ENCODE measurements at regions of chr20 and their contacts with region 1.

Region 1: DNA sequence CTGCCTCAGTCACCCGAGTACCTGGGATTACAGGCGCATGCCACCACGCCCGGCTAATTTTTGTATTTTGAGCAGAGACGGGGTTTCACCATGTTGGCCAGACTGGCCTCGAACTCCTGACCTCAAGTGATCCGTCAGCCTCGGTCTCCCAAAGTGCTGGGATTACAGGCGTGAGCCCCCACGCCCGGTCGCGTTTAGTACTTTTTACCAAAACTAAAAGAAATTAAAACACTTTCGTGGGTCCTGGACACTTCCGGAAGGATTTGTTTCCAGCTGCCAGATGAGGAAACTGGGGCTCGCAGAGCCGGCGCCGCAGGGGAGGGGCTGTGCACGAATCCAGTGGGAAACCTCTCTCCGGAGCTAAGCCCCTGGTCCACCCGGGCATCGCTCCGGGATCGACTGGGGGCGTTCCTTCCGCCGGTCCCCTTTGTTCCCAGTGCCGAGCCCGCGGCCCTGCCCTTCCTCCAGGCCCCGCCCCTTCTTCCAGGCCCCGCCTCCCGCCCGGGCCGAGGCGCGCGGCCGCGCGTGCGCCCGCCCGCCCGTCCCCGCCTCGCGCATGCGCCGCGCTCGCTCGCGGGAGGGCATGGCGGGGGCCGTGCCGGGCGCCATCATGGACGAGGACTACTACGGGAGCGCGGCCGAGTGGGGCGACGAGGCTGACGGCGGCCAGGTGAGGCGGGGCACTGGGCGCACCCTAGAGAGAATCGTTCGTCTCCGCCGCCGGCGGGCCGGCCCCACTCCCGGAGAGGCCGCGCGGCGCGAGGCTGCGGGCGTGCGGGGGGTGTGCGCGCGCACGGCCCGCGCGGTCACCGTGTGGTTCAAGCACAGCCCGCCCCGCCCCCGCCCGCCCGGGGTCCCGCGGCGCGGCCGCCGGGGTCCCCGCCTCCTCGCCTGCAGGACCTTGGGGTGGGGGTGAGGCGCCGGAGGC is at the start of gene NELFCD:
- DNase-seq: peak in 1 of 2 donors; percentile 92
- H3K4me3 ChIP-seq: peak within 1 kb of the TSS; percentile 85 to 96
- H3K27ac ChIP-seq: peak within 1 kb of the TSS; percentile 83 to 85
- H3K4me1 ChIP-seq: peaks cover 3 to 15% of the 10 kb centered on the region in 2 donors
- H3K27me3 ChIP-seq: no peaks in the 10 kb centered on the region
- CTCF ChIP-seq: no peak
- total RNA-seq, gene NELFCD: 20.8 TPM

Region 2: DNA sequence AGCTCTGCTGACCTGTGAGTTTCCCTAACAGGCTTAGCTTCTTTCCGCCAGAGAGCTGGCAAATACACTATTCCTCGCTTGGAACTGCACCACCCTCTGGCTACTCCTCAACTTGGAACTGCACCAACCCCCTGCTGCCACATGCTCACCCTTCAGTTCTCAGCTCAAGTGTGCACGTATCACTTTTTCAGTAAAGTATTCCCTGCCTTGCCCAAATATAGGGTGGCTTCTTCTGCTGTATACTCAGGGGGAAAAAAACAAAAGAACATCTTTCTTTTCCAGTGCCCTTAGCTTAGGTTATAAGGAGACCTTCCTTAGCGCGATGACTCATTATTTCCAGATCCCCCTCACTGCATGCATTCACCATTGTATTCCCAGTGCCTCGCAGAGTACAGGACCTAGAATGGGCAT is 151.4 kb before region 1 on chr20:
- intact Hi-C with region 1: no loop called
- DNase-seq: no peak
- H3K4me3 ChIP-seq: peak overlapping the region in 1 of 2 donors; percentile 16
- H3K27ac ChIP-seq: peak overlapping the region in 1 of 2 donors; percentile 71
- H3K4me1 ChIP-seq: no peaks in the 10 kb centered on the region
- H3K27me3 ChIP-seq: no peaks in the 10 kb centered on the region
- CTCF ChIP-seq: no peak

Region 3: DNA sequence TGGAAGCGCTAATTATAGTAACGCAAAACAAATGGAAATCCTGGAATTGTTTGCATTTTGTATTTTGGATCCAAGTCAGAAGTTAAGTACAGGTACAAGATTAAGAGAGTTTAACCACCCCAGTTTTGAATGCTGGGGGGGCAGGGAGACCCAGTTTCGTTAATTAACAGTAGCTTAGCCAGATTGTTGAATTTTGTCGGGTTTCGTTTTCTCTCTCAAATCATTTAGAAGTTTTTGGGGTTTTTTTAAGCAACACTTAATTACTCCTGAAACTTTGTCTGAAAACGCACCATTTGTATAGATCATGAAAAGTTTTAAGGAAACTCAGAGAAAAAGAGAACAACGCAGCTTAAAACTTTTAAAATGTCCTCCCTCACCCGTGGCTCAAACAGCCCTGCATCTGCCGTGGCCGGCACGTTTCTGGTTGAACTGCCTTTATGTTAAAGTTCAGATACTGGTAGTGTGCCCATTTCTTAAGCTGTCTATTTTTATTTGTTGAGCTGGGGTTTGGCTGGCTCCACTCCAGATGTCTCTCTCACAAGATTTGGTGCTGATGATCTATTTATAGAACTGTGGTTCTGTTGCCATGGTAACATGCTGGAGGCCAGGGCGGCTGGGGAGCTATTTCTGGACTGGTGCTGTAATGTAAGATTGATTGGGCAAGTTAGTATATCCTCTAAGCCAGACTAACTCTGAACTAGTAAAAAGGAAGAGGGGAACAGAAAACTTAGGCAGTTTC is 73.4 kb before region 1 on chr20:
- intact Hi-C with region 1: loop called (anchors 1 kb)
- DNase-seq: peak; percentile 90 to 98
- H3K4me3 ChIP-seq: peak overlapping the region; percentile 31 to 51
- H3K27ac ChIP-seq: peak overlapping the region; percentile 83 to 92
- H3K4me1 ChIP-seq: peaks cover 15 to 25% of the 10 kb centered on the region in 2 donors
- H3K27me3 ChIP-seq: no peaks in the 10 kb centered on the region
- CTCF ChIP-seq: no peak

Region 4: GRCh38 chr20:59006864-59007664 is 26.1 kb after region 1 on chr20 and contains the start of gene CTSZ:
- intact Hi-C with region 1: loop called (anchors 2 kb)
- DNase-seq: peak in 1 of 2 donors; percentile 73
- H3K4me3 ChIP-seq: peak within 1 kb of the TSS; percentile 73 to 82
- H3K27ac ChIP-seq: peak within 1 kb of the TSS; percentile 88
- H3K4me1 ChIP-seq: peaks cover 16 to 38% of the 10 kb centered on the region in 2 donors
- H3K27me3 ChIP-seq: no peaks in the 10 kb centered on the region
- CTCF ChIP-seq: no peak
- total RNA-seq, gene CTSZ: 342 TPM

Region 5: GRCh38 chr20:59042796-59043660 is 62.1 kb after region 1 on chr20:
- intact Hi-C with region 1: loop called (anchors 2 kb)
- DNase-seq: peak; percentile 71 to 96
- H3K4me3 ChIP-seq: peak overlapping the region; percentile 80 to 87
- H3K27ac ChIP-seq: peak overlapping the region; percentile 69 to 86
- H3K4me1 ChIP-seq: peaks cover 3 to 15% of the 10 kb centered on the region in 2 donors
- H3K27me3 ChIP-seq: no peaks in the 10 kb centered on the region
- CTCF ChIP-seq: no peak

Measured in ascending aorta (tissue), 2 donors.